Tibial artery (tissue), 4 donors: ENCODE measurements at regions of chr17 and their contacts with region 1.

Region 1: GRCh38 chr17:13002766-13003451 is 14.9 kb downstream of the ELAC2 start:
- DNase-seq: peak; percentile 85 to 86
- H3K4me3 ChIP-seq: no peak overlapping the region
- H3K27ac ChIP-seq: no peak overlapping the region
- H3K4me1 ChIP-seq: no peaks in the 10 kb centered on the region
- H3K27me3 ChIP-seq: no peaks in the 10 kb centered on the region
- CTCF ChIP-seq: peak; percentile 80 to 83

Region 2: DNA sequence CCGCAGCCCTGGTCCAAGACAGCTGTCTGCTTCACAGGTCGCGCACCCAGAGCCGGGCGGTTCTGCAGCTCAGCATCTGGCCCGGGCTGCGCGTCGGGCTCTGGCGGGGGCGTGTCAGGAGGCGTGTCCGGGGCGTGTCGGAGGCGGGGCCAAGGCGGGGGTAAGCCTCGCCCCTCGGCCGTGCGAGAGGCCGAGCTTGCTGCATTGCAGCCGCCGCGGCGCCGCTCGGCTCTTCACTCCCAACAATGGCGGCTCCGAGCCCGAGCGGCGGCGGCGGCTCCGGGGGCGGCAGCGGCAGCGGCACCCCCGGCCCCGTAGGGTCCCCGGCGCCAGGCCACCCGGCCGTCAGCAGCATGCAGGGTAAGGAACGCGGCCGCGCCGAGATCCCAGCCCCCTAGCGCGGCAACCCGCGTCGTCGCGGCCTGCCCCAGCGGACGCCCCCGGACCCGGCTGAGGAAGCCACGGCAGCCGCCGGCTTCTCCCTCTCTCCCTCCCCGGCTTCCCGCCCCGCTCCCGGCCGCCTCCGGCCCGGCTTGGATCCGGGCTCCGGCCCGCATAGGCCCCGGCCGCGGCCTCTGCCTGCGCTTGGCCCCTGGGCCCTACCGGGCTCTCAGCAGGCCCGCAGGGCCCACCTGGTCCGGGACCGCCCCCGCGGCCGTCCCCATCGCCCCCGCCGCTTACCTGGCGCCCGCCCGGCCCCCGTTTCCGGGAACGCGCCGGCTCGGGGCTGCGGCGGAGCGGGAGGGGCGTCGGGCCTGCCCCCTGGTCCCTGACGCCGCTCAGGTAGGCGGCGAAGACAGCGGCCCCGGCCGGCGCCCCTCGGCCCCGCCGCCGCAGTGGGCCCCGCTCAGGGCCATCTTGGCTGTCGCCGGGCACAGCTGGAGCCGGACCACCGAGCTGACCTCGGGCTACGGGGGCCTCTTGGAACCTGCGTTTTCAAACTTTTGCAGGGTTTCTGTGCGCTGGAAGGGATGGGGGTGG is 982.0 kb before region 1 on chr17 and contains the start of gene MAP2K4:
- intact Hi-C with region 1: loop called (anchors 10 kb)
- DNase-seq: peak; percentile 86 to 96
- H3K4me3 ChIP-seq: peak within 1 kb of the TSS; percentile 77 to 78
- H3K27ac ChIP-seq: peak within 1 kb of the TSS; percentile 75 to 90
- H3K4me1 ChIP-seq: peaks cover 0 to 41% (median 21%) of the 10 kb centered on the region in 4 donors
- H3K27me3 ChIP-seq: no peaks in the 10 kb centered on the region
- CTCF ChIP-seq: no peak

Region 3: DNA sequence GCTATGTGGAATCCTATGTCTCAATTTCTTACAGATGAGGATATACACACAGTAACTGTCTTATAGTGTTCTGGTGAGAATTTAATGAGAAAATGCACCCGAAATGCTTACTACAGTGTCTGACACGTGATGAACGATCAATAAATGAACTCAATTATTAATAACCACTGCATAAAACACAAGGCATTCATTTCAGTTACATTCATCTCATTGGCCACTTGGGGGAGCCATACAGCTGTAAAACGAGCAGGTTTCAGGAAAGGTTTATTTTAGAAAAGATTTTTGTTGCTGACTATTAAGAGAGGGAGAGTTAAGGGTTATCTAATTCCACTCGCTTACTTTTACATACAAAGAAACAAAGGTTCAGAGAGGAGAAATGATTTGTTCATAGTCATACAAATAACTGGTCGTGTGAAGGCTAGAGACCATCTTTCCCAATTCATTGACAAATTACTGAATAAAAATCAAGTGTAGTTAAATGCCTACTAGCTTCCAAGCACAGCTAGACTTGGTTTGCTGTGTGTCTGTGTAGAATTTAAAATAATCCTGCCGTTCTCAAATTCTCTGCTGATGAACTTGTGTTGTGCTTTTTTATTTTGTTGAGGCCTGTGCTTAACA is 822.2 kb before region 1 on chr17:
- intact Hi-C with region 1: loop called (anchors 5 kb)
- DNase-seq: no peak
- H3K4me3 ChIP-seq: no peak overlapping the region
- H3K27ac ChIP-seq: no peak overlapping the region
- H3K4me1 ChIP-seq: peaks cover 0 to 4% (median 0%) of the 10 kb centered on the region in 4 donors
- H3K27me3 ChIP-seq: no peaks in the 10 kb centered on the region
- CTCF ChIP-seq: peak; percentile 80 to 87

Region 4: DNA sequence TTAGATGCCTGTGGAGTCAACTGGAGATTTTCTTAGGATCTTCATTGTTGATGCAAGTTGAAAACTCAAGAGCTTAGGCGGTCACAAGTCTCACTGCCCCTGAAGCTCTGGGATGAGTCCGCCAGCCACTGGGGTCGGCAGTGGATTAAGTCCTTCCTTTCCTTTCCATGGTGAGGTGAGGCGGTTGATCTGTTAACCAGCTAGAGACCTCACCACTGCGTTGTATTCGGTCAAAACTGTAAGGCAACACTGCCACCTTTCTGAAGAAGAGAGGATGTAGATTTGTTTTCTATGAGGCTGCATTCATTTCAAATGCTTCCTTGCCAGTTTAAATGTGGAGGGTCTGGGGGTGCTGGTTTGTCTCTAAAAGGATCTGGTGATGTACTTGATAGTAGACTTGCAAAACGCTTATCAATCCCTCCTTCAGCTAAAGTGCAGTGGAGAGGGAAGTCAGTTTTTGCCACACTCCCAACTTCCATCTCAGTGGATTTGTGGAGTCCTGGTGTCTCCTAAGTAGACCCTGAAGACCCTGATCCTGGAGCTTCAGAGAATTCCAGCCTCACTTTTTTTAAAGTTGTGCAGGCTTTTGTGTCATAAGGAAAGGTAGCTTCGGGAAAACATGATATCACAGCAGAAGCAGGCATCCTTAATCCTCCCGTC is 335.5 kb before region 1 on chr17:
- intact Hi-C with region 1: loop called (anchors 5 kb)
- DNase-seq: no peak
- H3K4me3 ChIP-seq: peak overlapping the region; percentile 74 to 85
- H3K27ac ChIP-seq: peak overlapping the region; percentile 91 to 97
- H3K4me1 ChIP-seq: peaks cover 0 to 63% (median 16%) of the 10 kb centered on the region in 4 donors
- H3K27me3 ChIP-seq: no peaks in the 10 kb centered on the region
- CTCF ChIP-seq: peak; percentile 55 to 61